ENCODE measurements at regions of chr2 and their contacts with region 1.

Region 1: DNA sequence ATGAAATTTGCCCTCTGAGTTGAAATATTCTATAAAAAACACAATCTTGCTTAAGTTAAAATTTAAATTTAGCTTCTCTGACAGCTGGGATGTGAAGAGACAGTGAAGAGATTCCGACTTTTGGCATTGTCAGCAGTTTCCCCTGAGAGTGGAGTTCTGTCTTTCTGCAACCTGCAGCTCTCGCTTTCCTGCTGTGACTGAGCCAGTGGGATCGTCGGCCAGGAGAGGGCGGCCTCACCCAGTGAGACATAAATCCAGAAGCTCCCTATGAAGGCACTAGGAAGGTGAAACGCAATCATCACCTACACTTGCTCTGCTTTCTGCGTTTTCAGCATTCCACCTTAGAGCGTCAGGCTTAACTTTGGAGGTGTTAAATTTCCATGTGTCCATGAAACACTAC is 75.4 kb upstream of the HNMT start:
- DNase-seq: peak; percentile 71
- ATAC-seq: peak; percentile 65
- H3K4me3 Mint-ChIP-seq: no peak overlapping the region
- H3K27ac Mint-ChIP-seq: peak overlapping the region; percentile 35; the same call in 1 of the 2 replicates
- H3K4me1 Mint-ChIP-seq: peaks cover 21% of the 10 kb centered on the region
- H3K27me3 Mint-ChIP-seq: no peaks in the 10 kb centered on the region
- CTCF ChIP-seq: peak; percentile 24; the same call in 1 of the 2 replicates

Region 2: GRCh38 chr2:137764646-137765045 is 124.2 kb before region 1 on chr2:
- CTCF ChIA-PET with region 1: no interaction called
- POLR2A ChIA-PET with region 1: no interaction called
- DNase-seq: no peak
- ATAC-seq: peak; percentile 86
- H3K4me3 Mint-ChIP-seq: no peak overlapping the region
- H3K27ac Mint-ChIP-seq: no peak overlapping the region
- H3K4me1 Mint-ChIP-seq: peaks cover 11% of the 10 kb centered on the region
- H3K27me3 Mint-ChIP-seq: no peaks in the 10 kb centered on the region
- CTCF ChIP-seq: no peak

Region 3: GRCh38 chr2:137872577-137872976 is 16.3 kb before region 1 on chr2:
- CTCF ChIA-PET with region 1: interaction called, 10 read pairs
- POLR2A ChIA-PET with region 1: no interaction called
- DNase-seq: no peak
- ATAC-seq: no peak
- H3K4me3 Mint-ChIP-seq: no peak overlapping the region
- H3K27ac Mint-ChIP-seq: no peak overlapping the region
- H3K4me1 Mint-ChIP-seq: peaks cover under 1% of the 10 kb centered on the region; the same call in 1 of the 2 replicates
- H3K27me3 Mint-ChIP-seq: no peaks in the 10 kb centered on the region
- CTCF ChIP-seq: no peak

Region 4: DNA sequence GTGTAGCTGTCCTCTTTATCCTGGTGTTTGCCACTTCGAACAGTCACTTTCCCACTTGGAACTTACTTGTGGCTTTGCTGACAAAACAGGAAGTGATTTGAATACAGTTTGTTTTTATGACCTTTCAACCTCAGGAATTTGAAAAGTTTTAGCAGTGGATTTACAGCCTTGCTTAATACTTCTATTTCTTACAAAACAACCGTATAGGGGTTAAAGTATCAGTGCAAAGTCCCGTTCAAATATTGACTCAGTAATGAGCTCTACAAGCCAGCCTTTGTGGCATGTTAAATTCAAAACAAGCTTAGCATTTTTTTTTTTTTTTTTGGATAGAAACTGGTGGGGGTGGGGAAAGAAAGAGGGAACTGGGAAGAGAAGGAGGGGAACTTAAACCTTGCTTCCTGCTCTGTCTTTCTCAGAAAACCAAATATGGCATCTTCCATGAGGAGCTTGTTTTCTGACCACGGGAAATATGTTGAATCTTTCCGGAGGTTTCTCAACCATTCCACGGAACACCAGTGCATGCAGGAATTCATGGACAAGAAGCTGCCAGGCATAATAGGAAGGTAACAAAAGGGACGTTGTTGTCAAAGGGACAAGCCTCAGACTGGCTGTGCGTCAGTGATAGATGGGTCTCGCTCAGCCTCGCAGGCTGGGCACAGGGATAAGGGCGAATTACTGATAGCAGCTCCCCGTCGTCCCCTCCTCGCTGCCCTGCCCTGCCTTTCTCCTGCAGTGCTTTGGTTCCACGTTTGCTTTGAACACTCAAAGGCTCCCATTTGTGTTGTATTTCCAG is 75.4 kb after region 1 on chr2 and contains the start of gene HNMT:
- CTCF ChIA-PET with region 1: interaction called, 11 read pairs
- POLR2A ChIA-PET with region 1: no interaction called
- DNase-seq: peak; percentile 13
- ATAC-seq: peak; percentile 86
- H3K4me3 Mint-ChIP-seq: peak within 1 kb of the TSS; percentile 54
- H3K27ac Mint-ChIP-seq: peak within 1 kb of the TSS; percentile 93
- H3K4me1 Mint-ChIP-seq: peaks cover 20% of the 10 kb centered on the region
- H3K27me3 Mint-ChIP-seq: no peaks in the 10 kb centered on the region
- CTCF ChIP-seq: no peak
- total RNA-seq, gene HNMT: 2.8 to 4.6 TPM (median 3.1 TPM) in 3 replicates

Region 5: GRCh38 chr2:138155304-138155703 is 266.5 kb after region 1 on chr2:
- CTCF ChIA-PET with region 1: no interaction called
- POLR2A ChIA-PET with region 1: no interaction called
- DNase-seq: no peak
- ATAC-seq: no peak
- H3K4me3 Mint-ChIP-seq: no peak overlapping the region
- H3K27ac Mint-ChIP-seq: no peak overlapping the region
- H3K4me1 Mint-ChIP-seq: peaks cover 9% of the 10 kb centered on the region
- H3K27me3 Mint-ChIP-seq: no peaks in the 10 kb centered on the region
- CTCF ChIP-seq: no peak

Region 6: GRCh38 chr2:138787053-138787666 is 898.3 kb after region 1 on chr2:
- CTCF ChIA-PET with region 1: interaction called, 10 read pairs
- POLR2A ChIA-PET with region 1: no interaction called
- DNase-seq: no peak
- ATAC-seq: peak; percentile 41; the same call in 1 of the 2 replicates
- H3K4me3 Mint-ChIP-seq: no peak overlapping the region
- H3K27ac Mint-ChIP-seq: no peak overlapping the region
- H3K4me1 Mint-ChIP-seq: peaks cover 2% of the 10 kb centered on the region
- H3K27me3 Mint-ChIP-seq: peaks cover 33% of the 10 kb centered on the region
- CTCF ChIP-seq: peak; percentile 47